HEK293T (cell line): ENCODE measurements at regions of chr20 and their contacts with region 1.

Region 1: DNA sequence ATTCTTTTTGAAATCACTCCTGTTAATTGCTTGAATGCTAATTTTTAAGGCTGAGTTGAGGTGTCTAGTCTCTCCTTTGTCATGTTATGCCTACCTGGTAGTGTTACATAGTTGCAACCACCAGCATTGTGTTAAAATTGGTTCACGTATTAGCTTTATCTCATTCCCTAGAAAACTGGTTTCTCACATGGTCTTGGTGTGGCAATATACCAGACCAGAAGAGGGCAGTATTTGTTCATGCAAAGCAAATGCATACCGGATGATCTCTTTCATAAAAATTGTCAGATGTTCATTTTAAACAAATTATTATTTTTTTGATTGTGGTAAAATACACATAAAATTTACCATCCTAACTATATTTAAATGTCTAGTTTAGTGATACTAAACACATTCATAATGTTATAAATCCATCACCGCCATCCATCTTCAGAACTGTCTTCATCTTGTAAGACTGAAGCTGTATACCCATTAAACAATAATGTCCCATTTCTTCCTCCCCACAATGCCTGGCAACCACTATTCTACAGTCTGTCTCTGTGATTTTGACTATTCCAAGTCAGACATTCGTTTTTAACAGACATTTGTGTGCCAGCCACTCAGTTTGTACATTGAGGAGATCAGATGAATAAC is 92.8 kb downstream of the ATRN start:
- DNase-seq: peak; percentile 46

Region 2: GRCh38 chr20:3710703-3711483 is 147.2 kb after region 1 on chr20:
- CTCF ChIA-PET with region 1: interaction called, 14 read pairs
- POLR2A ChIA-PET with region 1: no interaction called
- DNase-seq: peak; percentile 87